Aorta (tissue), 5 donors: ENCODE measurements at regions of chr5 and their contacts with region 1.

Region 1: DNA sequence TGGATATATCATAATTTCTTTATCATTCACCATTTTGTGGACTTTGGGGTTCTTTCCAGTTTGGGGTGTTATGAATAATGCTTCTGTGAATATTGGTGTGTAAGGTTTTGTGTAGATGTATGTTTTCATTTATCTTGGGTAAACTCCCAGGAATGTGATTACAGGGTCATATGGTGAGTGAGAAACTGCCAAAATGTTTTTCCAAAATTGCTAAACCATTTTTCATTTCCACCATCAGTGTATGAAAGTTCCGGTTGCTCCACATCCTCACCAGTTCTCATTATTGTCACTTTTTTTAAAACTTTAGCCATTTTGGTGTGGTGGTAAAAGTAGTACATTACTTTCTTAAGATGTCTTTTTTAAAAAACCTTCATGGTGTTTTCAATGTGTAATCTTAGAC is 152.9 kb downstream of the NIPBL start:
- DNase-seq: no peak
- ATAC-seq: no peak
- H3K4me3 ChIP-seq: no peak overlapping the region
- H3K27ac ChIP-seq: no peak overlapping the region
- H3K4me1 ChIP-seq: no peaks in the 10 kb centered on the region
- H3K27me3 ChIP-seq: no peaks in the 10 kb centered on the region

Region 2: GRCh38 chr5:37103302-37103701 is 73.9 kb after region 1 on chr5:
- intact Hi-C with region 1: no loop called
- DNase-seq: no peak
- ATAC-seq: no peak
- H3K4me3 ChIP-seq: no peak overlapping the region
- H3K27ac ChIP-seq: no peak overlapping the region
- H3K4me1 ChIP-seq: no peaks in the 10 kb centered on the region
- H3K27me3 ChIP-seq: no peaks in the 10 kb centered on the region

Region 3: DNA sequence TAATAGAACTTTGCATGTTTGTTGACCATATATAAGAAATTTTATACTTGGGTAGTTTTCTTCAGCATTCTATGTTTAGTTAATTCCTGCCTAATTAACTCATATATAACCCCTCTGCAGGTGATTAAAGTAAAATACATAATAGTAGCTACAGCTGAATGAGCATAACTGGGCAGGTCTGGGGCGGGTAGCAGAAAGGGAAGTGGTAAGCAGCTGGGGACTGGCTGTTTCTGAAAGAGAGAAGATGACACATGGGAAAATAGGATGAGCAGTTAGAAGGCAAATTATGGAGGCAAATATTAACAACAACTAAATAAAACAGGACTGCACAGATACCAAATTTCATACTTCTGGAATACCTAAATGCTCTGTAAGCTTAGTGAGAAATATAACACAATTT is 91.6 kb after region 1 on chr5:
- intact Hi-C with region 1: no loop called
- DNase-seq: no peak
- ATAC-seq: no peak
- H3K4me3 ChIP-seq: no peak overlapping the region
- H3K27ac ChIP-seq: no peak overlapping the region
- H3K4me1 ChIP-seq: no peaks in the 10 kb centered on the region
- H3K27me3 ChIP-seq: no peaks in the 10 kb centered on the region

Region 4: GRCh38 chr5:37165761-37166160 is 136.3 kb after region 1 on chr5:
- intact Hi-C with region 1: loop called in 1 of 2 experiments (anchors 10 kb)
- DNase-seq: no peak
- ATAC-seq: no peak
- H3K4me3 ChIP-seq: no peak overlapping the region
- H3K27ac ChIP-seq: no peak overlapping the region
- H3K4me1 ChIP-seq: no peaks in the 10 kb centered on the region
- H3K27me3 ChIP-seq: no peaks in the 10 kb centered on the region